ENCODE measurements at regions of chr3 and their contacts with region 1.

Region 1: GRCh38 chr3:73175698-73176097 is 114.2 kb downstream of the EBLN2 start:
- DNase-seq: no peak

Region 2: GRCh38 chr3:72756900-72757299 is 418.8 kb before region 1 on chr3:
- intact Hi-C with region 1: loop called in 1 of 2 experiments (anchors 5 kb)
- DNase-seq: no peak

Region 3: GRCh38 chr3:73206022-73206421 is 30.3 kb after region 1 on chr3:
- intact Hi-C with region 1: no loop called
- DNase-seq: no peak

Measured in posterior vena cava (tissue), 2 donors.